ENCODE measurements at regions of chr10 and their contacts with region 1.

Region 1: DNA sequence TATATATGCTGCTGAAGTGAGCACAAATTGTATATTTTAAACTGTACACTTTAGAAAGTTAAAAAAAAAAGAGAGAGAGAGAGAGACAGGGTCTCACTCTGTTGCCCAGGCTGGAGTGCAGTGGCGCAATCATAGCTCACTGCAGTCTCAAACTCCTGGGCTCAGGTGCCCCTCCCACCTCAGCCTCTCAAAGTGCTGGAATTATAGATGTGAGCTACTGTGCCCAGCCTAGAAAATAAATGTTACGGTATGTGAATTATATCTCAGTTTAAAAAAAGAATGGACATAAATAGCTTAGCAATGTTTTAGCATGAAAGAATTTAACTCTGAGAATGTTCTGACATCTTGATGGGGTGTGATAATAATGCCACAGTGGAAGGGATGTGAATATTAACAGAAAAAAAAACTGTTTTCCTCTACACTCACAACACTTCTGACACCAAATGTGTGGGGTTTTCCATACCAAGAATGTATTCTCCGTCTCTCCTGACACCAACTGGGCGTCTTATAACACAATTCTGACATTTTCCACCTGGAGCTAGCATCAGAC is 162.1 kb downstream of the PLCE1 start:
- DNase-seq: no peak
- H3K4me3 ChIP-seq: no peak overlapping the region
- H3K27ac ChIP-seq: peak overlapping the region; percentile 65 to 69
- H3K4me1 ChIP-seq: peaks cover 3 to 8% of the 10 kb centered on the region in 2 donors
- H3K27me3 ChIP-seq: no peaks in the 10 kb centered on the region
- CTCF ChIP-seq: no peak

Region 2: GRCh38 chr10:94199565-94199964 is 43.8 kb after region 1 on chr10:
- intact Hi-C with region 1: loop called (anchors 5 kb)
- DNase-seq: peak in 1 of 2 donors; percentile 81
- H3K4me3 ChIP-seq: no peak overlapping the region
- H3K27ac ChIP-seq: peak overlapping the region; percentile 24 to 52
- H3K4me1 ChIP-seq: peaks cover 0 to 4% of the 10 kb centered on the region in 2 donors
- H3K27me3 ChIP-seq: no peaks in the 10 kb centered on the region
- CTCF ChIP-seq: no peak

Measured in ascending aorta (tissue), 2 donors.